GM13976 (cell line): ENCODE measurements at regions of chr15 and their contacts with region 1.

Region 1: GRCh38 chr15:82530606-82531379 is 9.5 kb downstream of the RPS17 start:
- DNase-seq: peak; percentile 73
- CTCF ChIP-seq: peak; percentile 84

Region 2: GRCh38 chr15:81504170-81504905 is 1026.5 kb before region 1 on chr15:
- in situ Hi-C with region 1: no loop called
- DNase-seq: no peak
- CTCF ChIP-seq: no peak

Region 3: DNA sequence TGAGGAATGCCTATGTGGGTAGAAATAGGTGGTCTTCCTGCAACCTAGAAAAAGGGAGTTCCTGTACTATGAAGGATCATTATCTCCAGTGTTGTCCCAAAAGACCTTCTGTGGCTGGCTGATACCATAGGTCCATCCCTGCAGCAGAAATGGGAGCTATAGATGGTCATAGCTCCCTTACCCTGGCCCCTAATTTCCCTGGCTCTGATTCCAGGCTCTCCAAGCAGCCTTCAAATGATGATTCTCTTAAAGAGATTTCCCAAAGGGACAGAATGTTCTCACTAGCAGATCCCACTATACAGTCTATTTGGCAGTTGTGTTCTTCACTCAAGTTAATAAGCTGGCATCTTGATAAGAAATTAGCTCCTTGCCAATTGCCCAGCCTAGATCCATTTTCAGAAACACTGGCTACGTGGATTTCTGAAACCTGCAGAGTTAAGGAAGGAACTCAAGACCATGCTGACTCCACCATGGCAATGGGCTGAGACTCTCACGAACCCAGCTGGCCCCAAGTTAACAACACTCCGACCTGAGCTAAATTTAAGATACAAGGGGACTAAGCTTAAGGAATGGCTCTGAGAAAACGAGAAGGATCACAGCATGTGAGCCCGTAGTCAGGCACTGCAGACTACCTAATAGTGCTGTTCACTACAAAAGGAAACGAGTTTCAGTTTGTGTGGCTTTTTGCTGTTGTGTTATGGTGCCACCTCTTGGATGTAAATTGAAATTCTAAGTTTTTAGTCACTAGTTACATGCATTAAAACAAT is 469.3 kb after region 1 on chr15:
- in situ Hi-C with region 1: loop called (anchors 10 kb)
- DNase-seq: peak; percentile 72
- CTCF ChIP-seq: no peak